ENCODE measurements at regions of chr2 and their contacts with region 1.

Region 1: GRCh38 chr2:230842473-230842872 is 22.3 kb upstream of the ITM2C start:
- DNase-seq: no peak
- H3K4me3 ChIP-seq: no peak overlapping the region
- H3K27ac ChIP-seq: no peak overlapping the region
- H3K4me1 ChIP-seq: peaks cover 3 to 9% (median 6%) of the 10 kb centered on the region in 4 experiments
- H3K27me3 ChIP-seq: peaks cover 0 to 2% (median 0%) of the 10 kb centered on the region in 5 experiments

Region 2: DNA sequence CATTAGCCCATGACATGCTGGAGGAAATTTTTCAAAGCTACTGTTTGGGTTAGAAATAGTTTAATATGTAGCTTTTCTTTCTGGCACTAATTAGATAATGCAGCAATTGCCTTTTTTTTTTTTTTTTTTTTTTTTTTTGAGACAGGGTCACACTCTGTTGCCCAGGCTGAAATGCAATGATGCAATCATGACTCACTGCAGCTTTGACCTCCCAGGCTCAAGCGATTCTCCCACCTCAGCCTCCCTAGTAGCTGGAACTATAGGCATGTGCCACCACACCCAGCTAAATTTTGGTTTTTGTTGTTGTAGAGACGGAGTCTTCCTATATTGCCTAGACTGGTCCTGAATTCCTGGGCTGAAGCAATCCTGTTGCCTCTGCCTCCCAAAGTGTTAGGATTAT is 290.3 kb before region 1 on chr2:
- CTCF ChIA-PET with region 1: no interaction called
- POLR2A ChIA-PET with region 1: no interaction called
- DNase-seq: no peak
- H3K4me3 ChIP-seq: no peak overlapping the region
- H3K27ac ChIP-seq: no peak overlapping the region
- H3K4me1 ChIP-seq: no peaks in the 10 kb centered on the region
- H3K27me3 ChIP-seq: no peaks in the 10 kb centered on the region

Region 3: GRCh38 chr2:230809677-230810251 is 32.7 kb before region 1 on chr2:
- CTCF ChIA-PET with region 1: no interaction called
- POLR2A ChIA-PET with region 1: no interaction called
- DNase-seq: no peak
- H3K4me3 ChIP-seq: no peak overlapping the region
- H3K27ac ChIP-seq: no peak overlapping the region
- H3K4me1 ChIP-seq: no peaks in the 10 kb centered on the region
- H3K27me3 ChIP-seq: no peaks in the 10 kb centered on the region

Region 4: GRCh38 chr2:230913406-230914143 is 71.1 kb after region 1 on chr2:
- CTCF ChIA-PET with region 1: interaction called, 18 read pairs
- POLR2A ChIA-PET with region 1: no interaction called
- DNase-seq: peak; percentile 82 to 93 (median 91)
- H3K4me3 ChIP-seq: no peak overlapping the region
- H3K27ac ChIP-seq: no peak overlapping the region
- H3K4me1 ChIP-seq: peaks cover 0 to 18% (median 8%) of the 10 kb centered on the region in 4 experiments
- H3K27me3 ChIP-seq: no peaks in the 10 kb centered on the region